ENCODE measurements at regions of chr9 and their contacts with region 1.

Region 1: DNA sequence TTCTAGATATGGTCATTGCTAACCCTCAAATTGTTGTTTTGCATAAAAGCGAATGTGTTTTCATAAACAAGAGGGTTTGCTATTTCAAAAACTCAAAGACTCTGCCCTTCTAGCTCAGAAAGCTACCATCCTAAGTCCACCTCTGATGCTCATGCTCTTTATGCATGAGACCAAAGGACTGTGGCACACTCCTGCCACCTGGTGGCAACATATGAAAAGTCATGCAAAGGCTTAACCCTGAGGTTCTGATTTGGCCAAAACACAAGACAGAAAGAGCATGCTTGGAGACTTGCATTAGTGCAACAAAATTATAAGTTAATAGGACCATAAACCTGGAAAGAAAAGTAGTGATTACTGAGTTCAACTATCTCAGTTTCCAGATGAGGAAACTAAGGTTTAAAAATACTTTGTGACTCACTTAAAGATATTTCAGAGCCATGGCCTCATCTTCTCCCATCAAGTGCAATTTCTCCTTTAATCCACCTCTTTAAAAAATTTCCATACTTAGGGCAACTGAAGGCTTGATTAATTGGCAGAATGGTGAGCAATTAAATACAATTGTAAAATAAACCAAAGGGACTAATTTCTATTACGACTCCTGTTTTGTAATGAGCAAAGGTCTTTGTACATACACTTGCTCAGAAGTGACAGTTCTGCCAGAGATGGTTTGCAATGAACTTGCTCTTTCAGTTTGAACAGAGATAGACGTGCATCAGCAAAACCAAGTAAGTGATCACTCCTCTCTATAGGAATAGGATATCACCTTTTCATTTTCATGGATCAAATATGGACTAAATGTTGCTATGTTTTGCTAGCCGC is 110.7 kb upstream of the RAD23B start:
- DNase-seq: peak; percentile 57
- CTCF ChIP-seq: peak; percentile 82

Region 2: DNA sequence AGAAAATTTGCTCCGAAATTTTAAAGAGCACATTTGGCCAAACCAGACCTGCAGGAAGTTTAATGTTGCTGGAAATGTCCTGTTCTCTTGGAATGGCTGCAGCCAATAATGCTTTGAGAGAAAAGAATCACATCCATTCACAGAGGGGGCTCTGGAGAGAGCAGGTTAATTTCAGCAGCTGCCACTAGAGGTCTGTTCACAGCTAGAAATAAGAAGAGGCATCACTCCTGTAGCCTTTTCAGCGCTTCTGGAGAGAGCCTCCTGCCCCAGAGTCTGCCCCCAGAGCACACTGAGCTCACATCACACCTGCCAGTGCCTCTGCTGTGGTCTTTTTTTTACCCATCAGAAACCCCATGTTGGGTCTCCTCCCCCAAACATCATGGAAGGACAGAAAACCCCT is 14.0 kb before region 1 on chr9:
- CTCF ChIA-PET with region 1: interaction called, 10 read pairs
- POLR2A ChIA-PET with region 1: no interaction called
- DNase-seq: no peak
- CTCF ChIP-seq: peak; percentile 44